MCF 10A (cell line): ENCODE measurements at regions of chr2 and their contacts with region 1.

Region 1: DNA sequence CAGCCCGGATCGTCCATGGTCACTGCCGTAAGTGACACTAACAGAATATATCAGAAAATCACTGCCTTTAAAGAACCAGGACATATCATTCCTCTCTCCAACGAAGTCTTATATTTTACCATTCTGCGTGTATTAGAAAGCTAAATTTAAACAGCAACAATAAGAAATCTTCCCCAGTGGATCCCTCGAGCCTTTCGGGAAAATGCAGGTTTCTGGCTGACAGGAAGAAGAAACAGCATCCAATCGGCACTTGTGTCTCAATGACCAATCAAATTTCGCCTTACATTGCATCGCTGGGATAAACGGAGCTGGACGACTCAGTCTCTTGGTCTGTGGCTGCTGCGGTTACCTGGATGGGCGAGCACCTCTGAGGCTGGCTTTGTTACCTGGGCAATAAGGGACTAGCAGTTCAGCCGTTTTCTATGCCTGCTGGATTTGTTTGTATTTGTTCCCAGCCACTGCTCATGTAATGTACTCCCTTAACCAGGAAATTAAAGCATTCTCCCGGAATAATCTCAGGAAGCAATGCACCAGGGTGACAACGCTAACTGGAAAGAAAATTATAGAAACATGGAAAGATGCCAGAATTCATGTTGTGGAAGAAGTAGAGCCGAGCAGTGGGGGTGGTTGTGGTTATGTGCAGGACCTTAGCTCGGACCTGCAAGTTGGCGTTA is at the start of gene DUSP19:
- DNase-seq: peak; percentile 98
- H3K4me3 Mint-ChIP-seq: peak within 1 kb of the TSS; percentile 95
- H3K27ac Mint-ChIP-seq: peak within 1 kb of the TSS; percentile 78
- H3K4me1 Mint-ChIP-seq: no peaks in the 10 kb centered on the region
- H3K27me3 Mint-ChIP-seq: no peaks in the 10 kb centered on the region
- CTCF ChIP-seq: no peak
- total RNA-seq, gene DUSP19: 0.84 and 1.0 TPM in 2 replicates

Region 2: DNA sequence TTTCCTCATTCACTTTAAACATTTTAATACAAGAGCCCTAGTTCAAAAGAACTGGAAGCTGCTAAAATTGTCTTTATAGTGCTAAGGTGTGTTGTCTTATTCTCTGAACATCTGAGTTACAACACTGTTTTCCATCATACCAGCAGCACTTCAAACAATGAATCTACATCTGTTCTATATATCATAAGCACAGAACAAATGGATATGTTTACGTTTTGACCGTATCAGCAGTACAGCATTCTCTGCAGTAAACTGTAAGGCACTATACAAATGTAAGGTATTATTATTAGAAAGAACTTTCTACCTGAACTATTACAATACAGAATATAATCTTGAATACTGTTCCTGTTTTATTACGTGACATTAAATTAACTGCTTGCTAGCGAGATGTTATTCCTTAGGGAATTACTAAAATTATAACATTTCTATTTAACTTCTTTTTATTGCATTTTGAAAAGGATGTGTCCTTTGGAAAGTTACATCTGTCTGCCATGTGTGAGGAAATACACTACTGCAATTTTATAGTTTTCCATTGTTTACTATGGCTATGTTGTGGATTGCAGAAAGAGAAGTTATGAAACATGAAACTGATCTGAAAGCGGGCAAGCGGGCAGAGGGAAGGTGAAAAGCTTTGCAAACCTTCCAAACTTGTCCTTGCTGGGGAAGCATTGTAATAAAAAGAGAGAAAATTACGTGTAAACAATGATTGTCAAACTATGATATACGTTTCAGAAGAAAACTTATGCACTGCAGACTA is 54.1 kb before region 1 on chr2:
- CTCF ChIA-PET with region 1: interaction called, 3 read pairs
- POLR2A ChIA-PET with region 1: interaction called, 25 read pairs
- intact Hi-C with region 1: no loop called
- DNase-seq: peak; percentile 48
- H3K4me3 Mint-ChIP-seq: no peak overlapping the region
- H3K27ac Mint-ChIP-seq: no peak overlapping the region
- H3K4me1 Mint-ChIP-seq: peaks cover 28% of the 10 kb centered on the region
- H3K27me3 Mint-ChIP-seq: no peaks in the 10 kb centered on the region
- CTCF ChIP-seq: no peak

Region 3: DNA sequence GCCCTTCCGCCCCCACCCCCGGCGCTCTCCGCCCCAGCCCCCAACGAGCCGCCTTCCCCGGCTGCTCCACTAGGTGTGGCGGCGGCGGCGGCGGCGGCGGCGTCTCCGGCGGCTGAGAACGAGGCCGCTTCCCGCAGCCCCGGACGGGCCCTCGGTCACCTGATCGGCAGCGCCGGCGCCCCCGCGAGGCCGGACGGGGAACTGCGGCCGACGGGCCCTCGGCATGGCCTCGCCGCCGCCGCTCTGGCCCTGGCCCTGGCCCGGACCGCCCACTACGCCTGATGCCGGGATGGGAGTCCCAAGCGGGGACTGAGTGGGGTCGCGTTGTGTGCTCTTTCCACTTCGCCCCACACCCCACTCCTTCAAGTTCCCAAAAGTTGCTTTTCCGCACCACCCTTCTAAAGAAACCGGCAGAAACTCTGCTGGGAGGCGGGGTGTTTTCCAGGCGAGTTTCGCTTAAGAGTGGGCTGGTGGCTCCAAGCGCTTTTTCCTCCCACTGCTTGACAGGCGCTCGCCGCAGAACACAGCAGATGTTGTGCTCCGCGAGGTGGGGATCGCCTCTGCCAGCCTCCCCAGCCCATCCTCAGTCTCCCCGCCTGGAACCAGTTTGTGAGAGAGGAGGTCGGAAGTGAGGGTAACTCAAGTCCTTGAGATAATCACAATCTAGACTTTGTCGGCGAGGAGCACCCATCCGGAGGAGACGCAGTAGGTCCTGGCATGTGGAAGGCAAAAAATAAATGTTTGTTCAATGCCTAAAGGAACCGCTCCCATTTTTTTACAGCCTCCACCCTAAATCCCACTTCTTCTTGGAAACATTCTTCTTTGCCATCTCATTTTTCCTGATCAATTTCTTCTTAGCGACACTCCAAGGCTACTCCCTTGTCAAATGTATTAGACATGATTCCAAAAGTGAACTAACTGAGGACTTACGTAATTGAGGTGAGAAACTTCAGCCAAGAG is 40.0 kb before region 1 on chr2 and contains the start of gene NCKAP1:
- CTCF ChIA-PET with region 1: interaction called, 4 read pairs
- POLR2A ChIA-PET with region 1: interaction called, 58 read pairs
- intact Hi-C with region 1: loop called (anchors 2 kb)
- DNase-seq: peak; percentile 88
- H3K4me3 Mint-ChIP-seq: peak within 1 kb of the TSS; percentile 96
- H3K27ac Mint-ChIP-seq: peak within 1 kb of the TSS; percentile 57
- H3K4me1 Mint-ChIP-seq: peaks cover 21% of the 10 kb centered on the region
- H3K27me3 Mint-ChIP-seq: no peaks in the 10 kb centered on the region
- CTCF ChIP-seq: peak; percentile 86
- total RNA-seq, gene NCKAP1: 160 and 187 TPM in 2 replicates

Region 4: DNA sequence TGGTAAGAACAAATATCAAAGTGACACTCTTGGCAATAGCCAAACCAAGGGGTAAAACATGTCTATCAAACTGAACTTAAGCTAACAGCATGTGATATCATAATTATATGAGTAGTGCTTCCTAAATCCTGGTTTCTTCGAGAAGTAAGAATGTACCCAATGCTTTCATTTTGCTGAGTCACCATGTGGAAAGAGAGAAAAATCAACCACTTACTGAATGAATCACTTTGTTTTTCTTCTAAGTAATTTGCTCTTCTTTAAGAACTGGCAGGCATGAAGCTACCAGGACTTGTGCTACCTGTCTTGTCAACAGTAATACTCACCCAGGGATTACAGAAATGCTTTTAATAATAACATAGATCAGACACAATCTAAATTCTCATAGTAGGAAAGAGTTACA is 19.0 kb before region 1 on chr2:
- CTCF ChIA-PET with region 1: interaction called, 7 read pairs
- POLR2A ChIA-PET with region 1: interaction called, 47 read pairs
- intact Hi-C with region 1: no loop called
- DNase-seq: peak; percentile 83
- H3K4me3 Mint-ChIP-seq: peak overlapping the region; percentile 13
- H3K27ac Mint-ChIP-seq: peak overlapping the region; percentile 83
- H3K4me1 Mint-ChIP-seq: peaks cover 11% of the 10 kb centered on the region
- H3K27me3 Mint-ChIP-seq: no peaks in the 10 kb centered on the region
- CTCF ChIP-seq: no peak

Region 5: DNA sequence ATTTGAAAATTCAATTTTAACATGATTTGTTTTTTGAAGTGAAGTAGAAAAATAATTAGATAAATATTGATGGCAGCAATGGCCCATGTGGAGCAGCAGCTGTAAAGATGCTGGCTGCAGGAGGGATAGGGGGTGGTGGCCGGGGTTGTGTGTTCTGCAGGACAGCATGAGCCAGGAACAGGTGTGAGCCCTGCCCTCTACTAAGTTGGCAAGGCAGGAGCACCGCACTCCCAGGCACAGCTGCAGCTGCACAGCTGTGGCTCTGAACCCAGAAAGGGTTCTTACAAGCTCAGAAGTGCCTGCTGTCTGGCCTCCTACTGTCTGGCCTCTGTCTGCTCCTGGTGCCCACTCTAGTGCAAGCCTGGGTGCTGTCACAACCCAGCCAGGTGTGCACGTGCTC is 10.0 kb before region 1 on chr2:
- CTCF ChIA-PET with region 1: interaction called, 5 read pairs
- POLR2A ChIA-PET with region 1: interaction called, 47 read pairs
- intact Hi-C with region 1: no loop called
- DNase-seq: no peak
- H3K4me3 Mint-ChIP-seq: no peak overlapping the region
- H3K27ac Mint-ChIP-seq: no peak overlapping the region
- H3K4me1 Mint-ChIP-seq: no peaks in the 10 kb centered on the region
- H3K27me3 Mint-ChIP-seq: no peaks in the 10 kb centered on the region
- CTCF ChIP-seq: no peak

Region 6: DNA sequence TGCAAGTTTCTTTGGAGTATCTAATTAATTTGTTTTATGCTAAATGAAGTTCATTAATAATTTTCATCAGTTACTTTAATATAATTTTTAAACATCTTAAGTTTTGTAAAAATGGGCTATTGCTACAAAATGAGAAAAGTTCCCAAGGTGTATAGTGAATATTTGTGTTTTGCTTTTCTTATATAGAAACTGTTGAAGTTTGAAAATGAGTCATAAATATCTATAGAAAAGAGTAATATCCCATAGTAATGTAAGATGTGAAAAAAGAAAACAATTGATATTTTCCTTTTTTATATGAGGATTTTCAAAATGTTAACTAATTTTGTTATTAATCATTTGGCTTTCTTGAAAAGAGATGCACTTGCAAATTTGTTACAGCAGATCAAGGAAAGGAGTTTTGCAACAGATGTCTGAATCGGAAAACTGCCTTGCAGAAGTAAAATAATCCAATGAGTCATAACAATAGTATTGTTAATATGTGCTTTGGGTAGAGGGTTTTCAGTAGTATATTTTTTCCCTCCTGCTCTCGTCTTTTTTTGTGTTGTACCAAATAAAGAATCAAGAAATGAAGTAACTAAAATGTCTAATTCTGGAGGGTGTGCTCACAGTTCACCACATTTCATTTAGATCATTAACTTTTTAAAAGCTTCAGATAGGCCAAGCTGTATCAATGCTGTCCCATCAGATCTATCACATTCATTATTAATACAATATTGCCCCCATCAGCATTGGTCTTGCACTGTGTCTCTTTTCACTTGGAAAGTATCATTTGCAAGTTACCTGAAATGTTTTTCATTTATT is 15.5 kb after region 1 on chr2:
- CTCF ChIA-PET with region 1: interaction called, 3 read pairs
- POLR2A ChIA-PET with region 1: interaction called, 19 read pairs
- intact Hi-C with region 1: no loop called
- DNase-seq: peak; percentile 47
- H3K4me3 Mint-ChIP-seq: no peak overlapping the region
- H3K27ac Mint-ChIP-seq: no peak overlapping the region
- H3K4me1 Mint-ChIP-seq: peaks cover 5% of the 10 kb centered on the region
- H3K27me3 Mint-ChIP-seq: no peaks in the 10 kb centered on the region
- CTCF ChIP-seq: peak; percentile 27

Region 7: DNA sequence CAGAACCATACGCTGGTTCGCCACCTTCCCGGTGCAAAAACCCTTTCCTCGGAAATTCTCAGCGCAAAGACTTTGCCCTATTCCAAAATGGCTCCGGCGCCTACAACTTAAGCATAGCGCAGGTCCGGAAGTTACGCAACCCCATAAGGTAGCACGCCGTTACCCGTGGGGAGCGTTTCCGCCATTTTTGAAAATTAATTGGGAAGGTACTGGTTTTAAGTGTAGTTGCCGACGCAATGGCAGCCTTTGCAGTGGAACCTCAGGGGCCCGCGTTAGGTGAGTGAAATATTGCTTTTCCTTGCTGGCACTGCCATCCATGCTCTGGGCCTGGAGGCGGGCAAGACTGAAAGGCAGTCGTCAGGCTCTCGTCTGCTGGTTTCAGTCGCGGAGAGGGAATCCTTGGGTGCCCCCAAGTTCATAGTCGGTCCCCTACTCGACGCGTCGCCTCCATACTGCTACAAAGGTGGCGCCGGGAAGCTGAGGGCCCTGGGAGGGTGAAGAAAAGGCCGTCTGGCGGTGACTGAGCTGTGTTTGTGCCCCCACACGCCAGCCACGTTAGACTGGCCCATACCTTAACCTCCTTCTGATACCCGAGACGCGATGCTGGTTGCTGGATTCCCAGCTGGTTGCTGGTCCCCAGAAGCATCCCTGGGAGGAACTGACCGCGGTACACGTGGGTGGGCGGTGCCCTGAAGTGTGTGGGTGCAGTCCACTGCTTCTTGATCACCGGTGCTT is 45.8 kb after region 1 on chr2 and contains the start of gene NUP35:
- CTCF ChIA-PET with region 1: interaction called, 5 read pairs
- POLR2A ChIA-PET with region 1: interaction called, 112 read pairs
- intact Hi-C with region 1: loop called (anchors 1 kb)
- DNase-seq: peak; percentile 95
- H3K4me3 Mint-ChIP-seq: peak within 1 kb of the TSS; percentile 84
- H3K27ac Mint-ChIP-seq: peak within 1 kb of the TSS; percentile 96
- H3K4me1 Mint-ChIP-seq: peaks cover 9% of the 10 kb centered on the region
- H3K27me3 Mint-ChIP-seq: no peaks in the 10 kb centered on the region
- CTCF ChIP-seq: no peak
- total RNA-seq, gene NUP35: 19.2 and 21.4 TPM in 2 replicates

Region 8: GRCh38 chr2:183436014-183436413 is 357.4 kb after region 1 on chr2:
- CTCF ChIA-PET with region 1: no interaction called
- POLR2A ChIA-PET with region 1: no interaction called
- intact Hi-C with region 1: no loop called
- DNase-seq: no peak
- H3K4me3 Mint-ChIP-seq: no peak overlapping the region
- H3K27ac Mint-ChIP-seq: no peak overlapping the region
- H3K4me1 Mint-ChIP-seq: no peaks in the 10 kb centered on the region
- H3K27me3 Mint-ChIP-seq: no peaks in the 10 kb centered on the region
- CTCF ChIP-seq: no peak